Common myeloid progenitor, CD34-positive (primary cell): ENCODE measurements at regions of chr7 and their contacts with region 1.

Region 1: GRCh38 chr7:1473864-1474512 is 14.7 kb upstream of the MICALL2 start:
- DNase-seq: peak; percentile 80 to 89 (median 87)
- H3K4me3 ChIP-seq: no peak overlapping the region
- H3K27ac ChIP-seq: no peak overlapping the region
- H3K4me1 ChIP-seq: peaks cover 0 to 6% (median 5%) of the 10 kb centered on the region in 4 experiments
- H3K27me3 ChIP-seq: no peaks in the 10 kb centered on the region

Region 2: GRCh38 chr7:1460821-1461645 is 13.0 kb before region 1 on chr7:
- CTCF ChIA-PET with region 1: interaction called, 11 read pairs
- POLR2A ChIA-PET with region 1: no interaction called
- DNase-seq: peak; percentile 41 to 81 (median 79)
- H3K4me3 ChIP-seq: peak overlapping the region in 4 of 7 experiments; percentile 67 to 80 (median 73)
- H3K27ac ChIP-seq: peak overlapping the region in 1 of 2 experiments; percentile 81
- H3K4me1 ChIP-seq: peaks cover 0 to 58% (median 54%) of the 10 kb centered on the region in 4 experiments
- H3K27me3 ChIP-seq: no peaks in the 10 kb centered on the region

Region 3: DNA sequence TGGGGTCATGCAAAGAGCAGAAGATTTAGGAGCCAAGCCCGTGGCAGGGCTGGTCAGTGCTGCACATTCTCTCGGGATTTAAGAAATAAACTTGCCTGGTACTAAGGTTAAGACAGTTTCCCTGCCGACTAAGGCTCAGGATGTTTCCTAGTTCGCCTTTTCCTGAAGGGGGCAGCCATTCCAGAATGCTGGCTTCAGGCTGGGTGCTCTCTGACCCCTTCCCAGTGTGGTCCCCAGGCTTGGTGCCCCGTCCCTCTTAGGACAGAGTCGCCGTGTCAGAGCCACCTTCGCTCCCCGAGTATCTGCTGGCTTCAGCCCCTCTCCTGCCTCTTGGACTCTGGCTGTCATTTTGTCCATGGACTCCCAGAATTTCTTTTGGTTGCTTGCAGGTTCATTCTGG is 313.3 kb after region 1 on chr7:
- CTCF ChIA-PET with region 1: no interaction called
- POLR2A ChIA-PET with region 1: no interaction called
- DNase-seq: no peak
- H3K4me3 ChIP-seq: no peak overlapping the region
- H3K27ac ChIP-seq: no peak overlapping the region
- H3K4me1 ChIP-seq: no peaks in the 10 kb centered on the region
- H3K27me3 ChIP-seq: peaks cover 0 to 2% (median 0%) of the 10 kb centered on the region in 5 experiments